Uterus (tissue), 4 donors: ENCODE measurements at regions of chr6 and their contacts with region 1.

Region 1: GRCh38 chr6:57316581-57317059 is 810 bp upstream of the PRIM2 start:
- DNase-seq: peak; percentile 85 to 87
- H3K4me3 ChIP-seq: peak overlapping the region; percentile 53 to 62
- H3K27ac ChIP-seq: peak overlapping the region; percentile 89
- H3K4me1 ChIP-seq: no peaks in the 10 kb centered on the region
- H3K27me3 ChIP-seq: no peaks in the 10 kb centered on the region
- CTCF ChIP-seq: peak; percentile 76 to 91 (median 87)
- POLR2A ChIP-seq: peak in 1 of 2 donors; percentile 15

Region 2: DNA sequence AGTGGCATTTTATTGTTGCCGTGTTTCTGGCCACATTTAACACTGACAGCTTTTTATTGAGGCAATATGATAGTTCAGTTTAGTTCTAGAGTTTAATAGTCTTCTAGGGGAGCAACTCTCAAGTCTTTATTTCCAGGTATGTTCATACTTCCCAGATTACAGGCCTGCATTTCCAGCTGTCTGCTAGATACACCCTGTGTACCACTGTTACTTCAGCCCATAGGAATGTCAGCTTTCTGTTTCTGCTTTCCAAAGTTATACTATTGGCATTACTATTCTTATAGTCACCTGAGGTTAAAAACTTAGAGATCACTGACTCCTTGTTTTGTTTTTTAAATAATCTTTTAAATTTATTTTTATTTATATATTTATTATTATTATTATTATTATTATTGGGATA is 219.0 kb before region 1 on chr6:
- intact Hi-C with region 1: no loop called
- DNase-seq: no peak
- H3K4me3 ChIP-seq: no peak overlapping the region
- H3K27ac ChIP-seq: no peak overlapping the region
- H3K4me1 ChIP-seq: peaks cover 0 to 3% of the 10 kb centered on the region in 2 donors
- H3K27me3 ChIP-seq: no peaks in the 10 kb centered on the region
- CTCF ChIP-seq: no peak
- POLR2A ChIP-seq: no peak

Region 3: GRCh38 chr6:57130661-57131177 is 185.9 kb before region 1 on chr6:
- intact Hi-C with region 1: no loop called
- DNase-seq: no peak
- H3K4me3 ChIP-seq: no peak overlapping the region
- H3K27ac ChIP-seq: peak overlapping the region in 1 of 2 donors; percentile 17
- H3K4me1 ChIP-seq: peaks cover 0 to 6% of the 10 kb centered on the region in 2 donors
- H3K27me3 ChIP-seq: no peaks in the 10 kb centered on the region
- CTCF ChIP-seq: peak in 1 of 4 experiments; percentile 9
- POLR2A ChIP-seq: no peak

Region 4: GRCh38 chr6:57172136-57173055 is 144.2 kb before region 1 on chr6 and contains the start of gene BAG2:
- intact Hi-C with region 1: loop called (anchors 10 kb)
- DNase-seq: peak; percentile 93 to 97
- H3K4me3 ChIP-seq: peak within 1 kb of the TSS; percentile 55 to 83
- H3K27ac ChIP-seq: peak within 1 kb of the TSS; percentile 98
- H3K4me1 ChIP-seq: no peaks in the 10 kb centered on the region
- H3K27me3 ChIP-seq: no peaks in the 10 kb centered on the region
- CTCF ChIP-seq: peak; percentile 11 to 54 (median 24)
- POLR2A ChIP-seq: peak; percentile 79 to 90
- total RNA-seq, gene BAG2: 23.2 to 31.7 (median 26.9) TPM

Region 5: DNA sequence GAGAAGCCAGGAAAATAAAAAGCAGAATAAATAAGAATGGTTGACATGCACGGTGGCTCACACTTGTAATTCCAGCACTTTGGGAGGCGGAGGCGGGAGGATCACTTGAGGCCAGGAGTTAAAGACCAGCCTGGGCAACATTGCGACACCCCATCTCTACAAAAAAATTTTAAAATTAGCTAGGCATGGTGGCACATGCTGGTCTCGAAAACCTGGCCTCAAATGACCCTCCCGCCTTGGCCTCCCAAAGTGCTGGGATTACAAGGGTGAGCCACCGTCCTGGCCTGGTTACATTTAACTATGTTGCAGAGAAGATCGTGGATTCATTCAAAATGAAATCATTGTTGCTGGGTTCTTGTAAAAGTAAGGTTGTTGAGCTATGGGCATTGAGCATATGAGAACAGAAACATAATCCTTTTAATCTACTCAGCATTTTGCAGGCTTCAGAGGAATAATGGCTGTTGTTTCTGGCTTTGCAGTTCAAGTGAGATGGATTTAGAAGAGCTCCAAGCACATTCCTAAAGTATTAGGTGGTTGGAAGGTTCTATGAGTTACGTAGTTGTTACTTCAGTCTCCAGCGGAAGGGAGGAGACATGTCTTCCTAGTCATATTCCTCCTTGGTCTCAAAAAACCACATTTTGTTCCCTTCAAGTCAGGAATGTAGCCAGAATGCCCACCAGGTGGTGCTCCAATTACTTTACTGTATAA is 48.9 kb before region 1 on chr6:
- intact Hi-C with region 1: no loop called
- DNase-seq: peak in 1 of 2 donors; percentile 63
- H3K4me3 ChIP-seq: no peak overlapping the region
- H3K27ac ChIP-seq: peak overlapping the region; percentile 29 to 99
- H3K4me1 ChIP-seq: peaks cover 3 to 5% of the 10 kb centered on the region in 2 donors
- H3K27me3 ChIP-seq: no peaks in the 10 kb centered on the region
- CTCF ChIP-seq: peak in 2 of 4 experiments; percentile 23 to 45
- POLR2A ChIP-seq: no peak